Mammary epithelial cell (primary cell): ENCODE measurements at regions of chr1 and their contacts with region 1.

Region 1: DNA sequence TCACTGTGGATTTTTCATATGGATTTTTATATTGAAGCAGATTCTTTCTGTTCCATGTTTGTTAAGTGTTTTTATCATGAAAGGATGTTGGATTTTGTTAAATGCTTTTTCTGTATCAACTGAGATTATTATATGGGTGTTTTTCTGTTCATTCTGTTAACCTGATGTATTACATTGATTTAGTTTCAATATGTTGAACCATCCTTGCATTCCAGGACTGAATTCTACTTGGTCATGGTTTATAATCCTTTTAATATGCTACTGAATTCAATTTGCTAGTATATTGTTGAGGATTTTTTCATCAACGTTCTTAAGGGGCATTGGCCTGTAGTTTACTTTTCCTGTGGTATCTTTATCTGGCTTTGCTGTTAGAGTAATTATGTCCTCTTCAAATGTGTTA is 55.8 kb downstream of the CCDC30 start:
- DNase-seq: no peak
- H3K4me3 ChIP-seq: no peak overlapping the region
- H3K27ac ChIP-seq: no peak overlapping the region
- H3K4me1 ChIP-seq: no peaks in the 10 kb centered on the region
- H3K27me3 ChIP-seq: no peaks in the 10 kb centered on the region
- CTCF ChIP-seq: no peak

Region 2: DNA sequence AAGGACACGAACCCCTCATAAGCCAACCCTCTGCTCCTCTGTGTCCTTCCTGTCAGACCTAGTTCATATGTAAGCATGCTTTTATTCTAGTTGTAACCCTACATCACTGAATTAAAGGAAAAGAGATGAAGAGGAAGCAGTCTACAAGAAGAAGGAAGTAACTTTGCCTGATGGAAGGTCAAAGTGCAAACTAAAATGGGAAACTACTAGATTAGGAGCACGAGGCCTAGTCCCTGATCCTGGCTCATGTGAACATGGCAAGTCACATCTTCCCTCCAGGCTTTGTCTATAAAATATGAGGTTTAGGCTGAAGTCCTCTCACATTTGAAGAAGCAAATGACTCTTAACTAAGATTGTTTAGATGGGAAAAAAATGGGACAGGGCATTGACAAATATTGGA is 76.2 kb before region 1 on chr1:
- CTCF ChIA-PET with region 1: interaction called, 29 read pairs
- dilution Hi-C with region 1: no loop called
- in situ Hi-C with region 1: no loop called
- intact Hi-C with region 1: no loop called
- DNase-seq: no peak
- H3K4me3 ChIP-seq: no peak overlapping the region
- H3K27ac ChIP-seq: no peak overlapping the region
- H3K4me1 ChIP-seq: peaks cover 10% of the 10 kb centered on the region
- H3K27me3 ChIP-seq: no peaks in the 10 kb centered on the region
- CTCF ChIP-seq: no peak